ENCODE measurements at regions of chr11 and their contacts with region 1.

Region 1: DNA sequence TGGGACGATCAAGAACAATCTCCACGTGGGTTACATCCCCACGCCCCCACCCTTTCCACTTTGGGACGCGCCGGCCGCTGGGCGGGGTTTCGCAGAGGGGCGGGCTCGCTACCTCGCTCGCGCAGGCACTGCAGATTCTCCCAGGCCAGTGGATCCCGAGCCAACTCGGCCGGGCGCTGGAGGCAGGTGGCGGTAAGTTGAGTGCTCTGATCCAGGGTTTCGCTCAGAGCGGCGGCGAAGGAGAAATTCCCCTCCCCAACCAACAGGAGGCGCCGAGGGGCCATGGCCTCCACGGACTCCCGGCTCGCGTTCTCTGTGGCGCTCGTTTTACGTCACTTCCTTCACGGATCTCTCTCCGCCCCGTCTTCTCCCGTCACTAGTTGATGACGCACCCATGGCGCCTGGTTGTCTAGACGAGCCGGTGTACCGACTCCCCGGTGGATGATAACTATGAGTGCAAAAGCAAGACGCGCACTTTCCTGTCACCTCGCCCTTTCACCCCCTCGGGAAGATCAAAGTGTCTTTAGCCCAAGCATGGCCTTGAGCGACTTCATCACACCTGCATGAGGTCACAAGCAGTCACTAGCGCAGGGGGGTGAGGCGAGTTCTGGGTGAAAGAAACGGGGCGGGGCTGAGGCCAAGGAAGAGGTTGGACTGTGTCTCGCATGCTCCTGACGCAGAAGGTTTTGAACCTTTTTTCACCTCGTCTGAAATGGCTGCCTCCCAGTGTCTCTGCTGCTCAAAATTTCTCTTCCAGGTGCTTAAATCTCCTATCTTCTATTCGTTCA is at the starts of genes CFAP68 and FDXACB1:
- DNase-seq: peak; percentile 97
- ATAC-seq: peak; percentile 95
- H3K4me3 ChIP-seq: peak within 1 kb of the TSS; percentile 71
- H3K27ac ChIP-seq: peak within 1 kb of the TSS; percentile 88
- H3K4me1 ChIP-seq: peaks cover 3% of the 10 kb centered on the region; the same call in 1 of the 2 replicates
- H3K27me3 ChIP-seq: no peaks in the 10 kb centered on the region
- CTCF ChIP-seq: peak; percentile 99
- POLR2A ChIP-seq: peak; percentile 34; the same call in 1 of the 2 replicates
- RAD21 ChIP-seq: peak; percentile 97
- total RNA-seq, gene CFAP68: 8.9 and 10.2 TPM in 2 replicates
- total RNA-seq, gene FDXACB1: 3.0 and 3.3 TPM in 2 replicates

Region 2: GRCh38 chr11:111932611-111932950 is 53.5 kb after region 1 on chr11:
- CTCF ChIA-PET with region 1: interaction called, 5 read pairs
- POLR2A ChIA-PET with region 1: no interaction called
- dilution Hi-C with region 1: no loop called
- in situ Hi-C with region 1: no loop called
- intact Hi-C with region 1: loop called (anchors 1 kb)
- DNase-seq: peak; percentile 28
- ATAC-seq: no peak
- H3K4me3 ChIP-seq: no peak overlapping the region
- H3K27ac ChIP-seq: no peak overlapping the region
- H3K4me1 ChIP-seq: peaks cover 16% of the 10 kb centered on the region
- H3K27me3 ChIP-seq: no peaks in the 10 kb centered on the region
- CTCF ChIP-seq: no peak
- POLR2A ChIP-seq: no peak
- RAD21 ChIP-seq: no peak

Region 3: GRCh38 chr11:111982019-111982464 is 103.0 kb after region 1 on chr11:
- CTCF ChIA-PET with region 1: interaction called, 3 read pairs
- POLR2A ChIA-PET with region 1: no interaction called
- dilution Hi-C with region 1: no loop called
- in situ Hi-C with region 1: no loop called
- intact Hi-C with region 1: loop called (anchors 2 kb)
- DNase-seq: peak; percentile 43
- ATAC-seq: no peak
- H3K4me3 ChIP-seq: no peak overlapping the region
- H3K27ac ChIP-seq: no peak overlapping the region
- H3K4me1 ChIP-seq: peaks cover 11% of the 10 kb centered on the region
- H3K27me3 ChIP-seq: no peaks in the 10 kb centered on the region
- CTCF ChIP-seq: peak; percentile 52
- POLR2A ChIP-seq: no peak
- RAD21 ChIP-seq: peak; percentile 64

Region 4: DNA sequence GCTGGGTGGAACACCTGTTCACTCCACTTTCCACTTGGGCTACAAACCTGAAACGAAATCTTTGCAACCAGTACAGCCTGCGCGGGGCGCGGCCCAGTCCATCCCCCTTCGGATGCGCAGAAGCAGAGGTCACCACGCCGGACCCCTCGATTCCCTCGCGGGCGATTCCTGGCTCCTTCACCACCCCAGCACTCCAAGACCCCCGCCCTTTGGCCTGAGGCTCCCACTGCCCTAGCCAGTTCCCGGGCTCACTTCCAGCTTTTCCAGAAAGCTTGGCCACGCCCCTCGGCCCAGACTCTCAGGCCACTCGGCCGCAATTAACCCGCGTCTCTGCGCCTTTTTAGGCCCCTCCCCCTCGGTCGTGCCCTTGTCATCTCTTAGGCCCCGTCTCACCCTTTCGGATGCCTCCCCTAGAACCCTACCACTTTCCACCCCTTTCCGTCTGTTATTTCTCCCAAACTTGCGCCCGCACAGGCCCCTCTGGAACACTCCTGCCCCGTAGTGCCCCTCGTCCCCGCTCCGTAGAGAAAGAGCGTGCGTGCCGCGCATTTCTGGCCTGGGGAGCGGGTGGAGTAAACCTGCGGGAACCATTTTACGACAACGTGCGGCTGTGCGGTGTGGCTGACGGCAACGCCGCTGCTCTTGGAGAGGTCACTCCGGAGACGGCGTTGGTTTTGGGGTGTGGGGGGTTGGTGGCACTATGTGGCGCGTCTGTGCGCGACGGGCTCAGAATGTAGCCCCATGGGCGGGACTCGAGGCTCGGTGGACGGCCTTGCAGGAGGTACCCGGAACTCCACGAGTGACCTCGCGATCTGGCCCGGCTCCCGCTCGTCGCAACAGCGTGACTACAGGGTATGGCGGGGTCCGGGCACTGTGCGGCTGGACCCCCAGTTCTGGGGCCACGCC is 146.0 kb after region 1 on chr11 and contains the start of gene DLAT:
- CTCF ChIA-PET with region 1: interaction called, 3 read pairs
- POLR2A ChIA-PET with region 1: no interaction called
- dilution Hi-C with region 1: no loop called
- in situ Hi-C with region 1: no loop called
- intact Hi-C with region 1: loop called (anchors 1 kb)
- DNase-seq: peak; percentile 75
- ATAC-seq: peak; percentile 94
- H3K4me3 ChIP-seq: peak within 1 kb of the TSS; percentile 70
- H3K27ac ChIP-seq: peak within 1 kb of the TSS; percentile 88
- H3K4me1 ChIP-seq: no peaks in the 10 kb centered on the region
- H3K27me3 ChIP-seq: no peaks in the 10 kb centered on the region
- CTCF ChIP-seq: no peak
- POLR2A ChIP-seq: peak; percentile 60; the same call in 1 of the 2 replicates
- RAD21 ChIP-seq: 0 out of 2 replicates have a peak, but pooled peaks have one; percentile 2
- total RNA-seq, gene DLAT: 27.2 and 33.1 TPM in 2 replicates

Region 5: GRCh38 chr11:112086422-112087191 is 207.6 kb after region 1 on chr11 and contains the starts of genes SDHD and TIMM8B:
- CTCF ChIA-PET with region 1: no interaction called
- POLR2A ChIA-PET with region 1: interaction called, 5 read pairs
- dilution Hi-C with region 1: no loop called
- in situ Hi-C with region 1: no loop called
- intact Hi-C with region 1: loop called (anchors 1 kb)
- DNase-seq: peak; percentile 96
- ATAC-seq: peak; percentile 92
- H3K4me3 ChIP-seq: peak within 1 kb of the TSS; percentile 78
- H3K27ac ChIP-seq: peak within 1 kb of the TSS; percentile 84
- H3K4me1 ChIP-seq: peaks cover 2% of the 10 kb centered on the region; the same call in 1 of the 2 replicates
- H3K27me3 ChIP-seq: no peaks in the 10 kb centered on the region
- CTCF ChIP-seq: peak; percentile 44
- POLR2A ChIP-seq: peak; percentile 73
- RAD21 ChIP-seq: peak; percentile 45
- total RNA-seq, gene SDHD: 83.2 and 130 TPM in 2 replicates
- total RNA-seq, gene TIMM8B: 35.5 and 48.9 TPM in 2 replicates

Region 6: DNA sequence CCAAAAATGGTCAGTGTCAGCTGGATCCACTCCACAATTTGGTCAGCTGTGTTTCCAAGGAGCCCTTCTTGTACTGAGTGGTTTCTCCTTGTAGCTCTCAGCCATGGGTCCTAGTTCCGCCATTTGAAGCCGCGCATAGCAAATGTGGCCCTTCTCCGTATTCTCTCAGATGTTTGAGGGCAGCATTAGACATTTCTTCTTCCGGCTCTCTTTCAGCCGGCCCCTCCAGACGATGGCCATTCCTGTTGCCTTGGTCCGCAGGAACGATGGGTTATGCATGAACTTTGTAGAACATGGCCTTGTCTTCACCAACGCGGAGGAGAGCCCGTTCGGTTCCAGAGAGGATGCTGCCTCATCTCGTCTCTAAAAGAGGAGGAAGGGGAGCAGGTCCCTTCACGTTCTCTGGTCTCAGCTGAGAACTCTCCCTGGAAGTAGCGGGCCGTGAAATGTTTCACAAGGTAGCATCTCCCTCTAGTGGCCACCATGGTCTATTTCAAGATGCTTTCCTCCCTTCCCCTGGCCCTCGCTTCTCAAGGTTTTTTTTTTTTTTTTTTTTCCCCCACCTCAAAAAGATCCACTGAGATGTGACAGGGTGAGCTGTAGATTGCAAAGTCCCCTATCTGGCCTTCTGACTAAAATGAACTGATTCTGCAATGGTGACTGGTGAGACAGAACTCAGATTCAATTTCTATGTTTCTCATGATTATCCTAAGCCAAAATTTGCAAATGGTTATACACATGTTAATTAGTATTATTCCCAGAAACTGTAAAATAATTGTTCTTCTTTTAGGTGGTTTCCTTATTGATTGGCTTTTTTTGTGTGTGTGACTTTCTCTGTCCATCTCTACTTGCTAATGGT is 401.5 kb after region 1 on chr11:
- CTCF ChIA-PET with region 1: no interaction called
- POLR2A ChIA-PET with region 1: no interaction called
- dilution Hi-C with region 1: no loop called
- in situ Hi-C with region 1: no loop called
- intact Hi-C with region 1: loop called (anchors 1 kb)
- DNase-seq: peak; percentile 83
- ATAC-seq: peak; percentile 91
- H3K4me3 ChIP-seq: peak overlapping the region; percentile 24
- H3K27ac ChIP-seq: no peak overlapping the region
- H3K4me1 ChIP-seq: peaks cover 2% of the 10 kb centered on the region
- H3K27me3 ChIP-seq: 0 out of 2 replicates have a peak, but pooled peaks cover 7% of the 10 kb centered on the region
- CTCF ChIP-seq: peak; percentile 85
- POLR2A ChIP-seq: no peak
- RAD21 ChIP-seq: peak; percentile 87